WTC11 (cell line): ENCODE measurements at regions of chr16 and their contacts with region 1.

Region 1: DNA sequence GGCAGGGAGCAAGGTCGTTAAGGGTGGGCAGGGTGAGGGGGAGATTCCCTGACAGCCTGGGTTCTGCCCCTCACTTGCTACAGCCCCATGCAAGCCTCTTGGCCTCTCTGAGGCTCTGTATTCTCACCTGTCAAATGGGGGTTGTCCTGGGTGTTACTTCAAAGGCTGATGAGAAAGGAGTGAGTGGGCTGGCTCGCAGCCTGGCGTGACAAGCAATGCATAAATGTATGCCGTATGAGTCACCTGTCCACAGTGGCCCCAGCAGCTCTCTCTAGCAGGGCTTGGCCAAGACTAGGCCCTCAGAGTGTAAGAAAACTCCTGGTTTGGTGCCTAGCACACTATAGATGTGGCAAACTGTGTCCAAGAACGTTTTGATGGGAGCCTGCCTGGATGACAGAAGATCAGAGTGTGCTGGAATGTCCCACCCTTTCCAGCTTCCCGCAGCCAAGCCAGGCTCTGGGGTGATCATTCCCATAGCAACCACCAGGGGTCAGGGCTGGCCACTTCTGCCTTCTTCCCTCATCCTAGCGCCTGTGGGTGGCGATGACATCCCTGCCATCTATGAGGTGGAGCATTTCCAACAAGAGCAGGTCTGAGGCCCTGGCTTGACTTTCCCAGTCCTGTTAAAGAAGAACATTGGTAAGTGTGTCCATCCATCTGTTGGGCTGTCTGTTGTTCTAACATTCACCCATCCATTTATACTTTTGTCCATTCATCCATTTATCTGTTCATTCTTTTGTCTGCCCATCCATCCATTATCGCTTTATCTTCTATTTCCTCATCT is 37.2 kb upstream of the ADGRG1 start:
- DNase-seq: peak; percentile 83
- ATAC-seq: peak; percentile 99
- H3K4me3 Mint-ChIP-seq: no peak overlapping the region
- H3K27ac Mint-ChIP-seq: no peak overlapping the region
- H3K4me1 Mint-ChIP-seq: 0 out of 2 replicates have a peak, but pooled peaks cover 3% of the 10 kb centered on the region
- H3K27me3 Mint-ChIP-seq: peaks cover 28% of the 10 kb centered on the region
- CTCF ChIP-seq: peak; percentile 94

Region 2: GRCh38 chr16:57564571-57565270 is 26.6 kb before region 1 on chr16:
- CTCF ChIA-PET with region 1: no interaction called
- POLR2A ChIA-PET with region 1: no interaction called
- DNase-seq: no peak
- ATAC-seq: no peak
- H3K4me3 Mint-ChIP-seq: no peak overlapping the region
- H3K27ac Mint-ChIP-seq: no peak overlapping the region
- H3K4me1 Mint-ChIP-seq: no peaks in the 10 kb centered on the region
- H3K27me3 Mint-ChIP-seq: peaks cover 21% of the 10 kb centered on the region
- CTCF ChIP-seq: no peak

Region 3: DNA sequence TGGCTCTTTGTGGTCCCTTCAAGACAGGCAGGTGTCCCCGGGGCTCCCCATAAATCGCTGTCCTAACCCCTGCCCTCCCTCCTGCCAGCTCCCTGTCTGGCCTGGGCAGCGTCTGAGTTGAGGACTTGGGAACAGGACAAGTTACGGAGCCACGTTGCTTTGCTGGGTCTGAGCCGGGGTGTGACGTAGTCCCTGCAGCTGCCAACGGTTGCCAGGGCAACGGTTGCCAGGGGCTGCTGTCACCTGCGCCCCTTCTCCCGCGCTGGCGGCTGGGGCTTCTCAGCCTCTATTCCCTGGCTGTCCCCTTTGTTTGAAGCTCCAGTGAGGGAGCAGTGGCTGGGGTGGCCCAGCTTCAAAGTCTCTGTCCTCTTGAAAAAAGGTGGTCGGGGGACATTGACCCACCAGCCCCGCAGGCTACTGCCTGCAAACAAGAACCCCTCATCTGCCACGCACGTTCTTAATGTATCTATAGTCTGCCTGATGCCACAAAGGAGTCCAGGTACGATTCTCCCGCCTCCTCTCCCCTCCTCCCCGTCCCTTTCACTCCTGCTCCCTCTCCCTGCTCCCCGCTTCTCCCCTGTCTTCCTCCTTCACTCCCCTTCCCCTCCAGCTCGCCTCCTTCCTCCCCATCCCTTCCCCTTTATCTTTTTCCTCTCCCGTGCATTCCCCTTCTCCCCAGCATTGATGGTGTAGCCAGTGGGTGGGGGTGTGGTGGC is 48.1 kb after region 1 on chr16:
- CTCF ChIA-PET with region 1: interaction called, 10 read pairs
- POLR2A ChIA-PET with region 1: no interaction called
- DNase-seq: peak; percentile 75
- ATAC-seq: peak; percentile 85
- H3K4me3 Mint-ChIP-seq: no peak overlapping the region
- H3K27ac Mint-ChIP-seq: no peak overlapping the region
- H3K4me1 Mint-ChIP-seq: no peaks in the 10 kb centered on the region
- H3K27me3 Mint-ChIP-seq: peaks cover 7% of the 10 kb centered on the region; the same call in 1 of the 2 replicates
- CTCF ChIP-seq: no peak

Region 4: GRCh38 chr16:57667526-57668258 is 76.4 kb after region 1 on chr16:
- CTCF ChIA-PET with region 1: interaction called, 11 read pairs
- POLR2A ChIA-PET with region 1: no interaction called
- DNase-seq: peak; percentile 66
- ATAC-seq: peak; percentile 66
- H3K4me3 Mint-ChIP-seq: no peak overlapping the region
- H3K27ac Mint-ChIP-seq: no peak overlapping the region
- H3K4me1 Mint-ChIP-seq: no peaks in the 10 kb centered on the region
- H3K27me3 Mint-ChIP-seq: no peaks in the 10 kb centered on the region
- CTCF ChIP-seq: 0 out of 2 replicates have a peak, but pooled peaks have one; percentile 28